ENCODE measurements at regions of chr11 and their contacts with region 1.

Region 1: GRCh38 chr11:118198370-118198769 is 21.9 kb upstream of the SCN2B start:
- DNase-seq: peak; percentile 92
- ATAC-seq: peak; percentile 40
- H3K4me3 Mint-ChIP-seq: no peak overlapping the region
- H3K27ac Mint-ChIP-seq: peak overlapping the region; percentile 78
- H3K4me1 Mint-ChIP-seq: peaks cover 14% of the 10 kb centered on the region
- H3K27me3 Mint-ChIP-seq: no peaks in the 10 kb centered on the region

Region 2: DNA sequence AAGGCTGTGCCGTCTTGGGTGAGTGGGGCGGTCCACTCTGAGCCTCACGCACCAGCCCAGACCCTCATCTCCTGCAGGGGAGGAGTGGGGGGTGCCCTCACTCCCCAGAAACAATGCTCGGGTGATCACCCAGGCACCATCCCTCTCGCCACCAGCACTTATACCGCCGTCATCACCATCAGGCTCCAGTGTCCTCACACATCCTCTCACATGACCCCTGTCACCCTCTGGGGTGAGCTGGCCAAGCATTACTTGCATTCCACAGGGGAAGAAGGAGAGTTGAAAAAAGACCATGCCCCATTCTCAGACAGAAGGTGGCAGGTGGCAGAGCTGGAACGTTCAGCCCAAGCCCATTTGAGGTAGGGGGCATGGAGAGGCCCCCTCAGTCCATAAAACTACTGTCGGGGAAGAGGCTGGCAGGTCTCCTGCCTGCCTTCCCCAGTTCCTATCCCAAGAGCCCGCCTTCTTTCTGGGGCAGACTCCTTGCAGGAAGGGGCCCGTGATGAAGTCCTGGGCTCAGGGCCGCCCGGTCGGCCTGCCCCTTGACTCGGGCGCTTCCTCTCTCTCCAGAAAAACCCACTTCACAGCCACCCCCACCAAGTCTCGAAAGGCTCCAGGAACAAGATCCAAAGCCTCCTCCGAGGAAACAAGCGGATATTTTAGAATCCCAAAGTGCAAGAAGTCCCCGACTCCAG is 554.6 kb before region 1 on chr11:
- CTCF ChIA-PET with region 1: no interaction called
- DNase-seq: no peak
- ATAC-seq: no peak
- H3K4me3 Mint-ChIP-seq: no peak overlapping the region
- H3K27ac Mint-ChIP-seq: no peak overlapping the region
- H3K4me1 Mint-ChIP-seq: no peaks in the 10 kb centered on the region
- H3K27me3 Mint-ChIP-seq: no peaks in the 10 kb centered on the region

Region 3: DNA sequence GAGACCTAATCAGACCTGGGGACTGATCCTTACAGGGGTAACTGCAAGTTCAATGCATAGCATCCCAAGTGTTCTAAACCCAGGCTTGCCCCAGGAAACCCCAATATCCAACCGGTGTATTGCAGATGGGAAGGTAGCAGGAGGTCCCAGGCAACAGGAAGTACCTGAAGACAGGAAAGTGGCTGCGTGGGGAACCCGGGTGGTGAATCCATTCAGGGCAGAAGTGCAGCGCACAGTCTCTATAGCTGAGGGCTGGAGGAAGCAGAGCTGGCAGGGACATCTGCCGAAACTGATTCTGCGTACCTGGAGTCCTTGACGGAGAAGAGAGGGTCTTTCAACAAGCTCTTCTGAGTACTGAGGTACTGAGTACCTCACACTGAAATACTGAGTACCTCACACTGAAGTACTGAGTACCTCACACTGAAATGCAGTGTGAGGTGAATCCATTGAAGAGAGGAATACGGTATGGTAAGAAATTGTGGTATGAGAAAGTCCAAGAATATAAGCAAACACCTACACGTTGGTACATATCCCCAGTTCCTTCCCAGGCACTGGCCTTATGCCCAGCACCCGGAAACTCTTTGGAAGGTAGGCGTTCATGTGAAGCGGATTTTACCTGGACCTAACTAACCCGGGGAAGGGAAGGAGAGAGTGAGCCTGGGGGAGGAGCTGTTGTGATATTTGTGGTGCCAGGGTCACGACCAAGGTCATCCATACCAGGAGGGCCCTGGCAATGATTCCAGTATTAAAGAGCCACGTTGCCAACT is 65.8 kb before region 1 on chr11:
- CTCF ChIA-PET with region 1: no interaction called
- DNase-seq: no peak
- ATAC-seq: no peak
- H3K4me3 Mint-ChIP-seq: no peak overlapping the region
- H3K27ac Mint-ChIP-seq: no peak overlapping the region
- H3K4me1 Mint-ChIP-seq: peaks cover 7% of the 10 kb centered on the region
- H3K27me3 Mint-ChIP-seq: peaks cover 42% of the 10 kb centered on the region

Region 4: DNA sequence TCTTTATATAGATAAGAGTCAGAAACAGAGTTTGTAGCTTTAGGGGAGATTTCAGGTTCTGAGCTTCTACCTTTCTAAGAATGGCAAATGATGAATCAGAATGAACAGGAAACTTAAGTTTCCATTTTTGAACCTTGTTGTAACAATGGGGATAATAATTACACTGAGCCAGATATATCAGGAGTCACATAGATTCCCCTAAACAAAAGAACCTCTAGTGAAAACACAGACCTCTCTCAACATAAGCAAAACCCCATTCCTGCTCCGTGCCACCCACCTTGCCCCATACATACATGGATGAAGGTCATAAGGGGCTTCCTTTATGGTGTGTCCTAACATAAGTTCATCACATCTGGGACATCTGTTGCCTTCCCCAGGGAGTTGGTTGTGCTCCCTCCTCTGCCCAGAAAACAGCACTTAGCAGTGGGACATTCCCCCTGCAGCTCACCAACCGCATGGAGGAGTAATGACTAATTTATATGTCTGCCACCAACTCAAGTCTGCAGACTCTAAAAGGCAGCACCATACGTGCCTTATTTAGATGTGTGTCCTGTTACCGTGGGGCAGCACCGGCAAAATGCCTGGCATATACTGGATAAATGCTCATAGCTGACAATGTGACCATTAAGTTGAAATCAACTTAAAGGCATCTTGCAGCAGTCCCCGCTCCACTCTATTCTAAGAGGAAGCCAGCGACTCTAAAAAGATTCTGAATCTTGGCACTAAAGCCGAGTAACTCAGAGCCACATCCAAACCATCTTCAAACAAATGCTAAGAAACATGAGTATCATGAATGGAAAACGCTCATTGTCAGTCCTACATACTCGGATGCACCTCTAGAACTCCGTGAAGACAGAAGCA is 18.5 kb after region 1 on chr11:
- CTCF ChIA-PET with region 1: interaction called, 53 read pairs
- DNase-seq: peak; percentile 75
- ATAC-seq: peak; percentile 67
- H3K4me3 Mint-ChIP-seq: peak overlapping the region; percentile 79
- H3K27ac Mint-ChIP-seq: peak overlapping the region; percentile 98
- H3K4me1 Mint-ChIP-seq: peaks cover 97% of the 10 kb centered on the region
- H3K27me3 Mint-ChIP-seq: no peaks in the 10 kb centered on the region

Region 5: GRCh38 chr11:118251858-118252652 is 53.7 kb after region 1 on chr11 and contains the start of gene MPZL3:
- CTCF ChIA-PET with region 1: interaction called, 80 read pairs
- DNase-seq: peak; percentile 90
- ATAC-seq: peak; percentile 65
- H3K4me3 Mint-ChIP-seq: peak within 1 kb of the TSS; percentile 90
- H3K27ac Mint-ChIP-seq: peak within 1 kb of the TSS; percentile 99
- H3K4me1 Mint-ChIP-seq: peaks cover 41% of the 10 kb centered on the region
- H3K27me3 Mint-ChIP-seq: no peaks in the 10 kb centered on the region
- total RNA-seq, gene MPZL3: 20.4 to 28.4 TPM

Region 6: GRCh38 chr11:118283756-118284350 is 85.5 kb after region 1 on chr11:
- CTCF ChIA-PET with region 1: interaction called, 27 read pairs
- DNase-seq: no peak
- ATAC-seq: peak; percentile 23
- H3K4me3 Mint-ChIP-seq: no peak overlapping the region
- H3K27ac Mint-ChIP-seq: peak overlapping the region; percentile 30
- H3K4me1 Mint-ChIP-seq: peaks cover 23% of the 10 kb centered on the region
- H3K27me3 Mint-ChIP-seq: no peaks in the 10 kb centered on the region

Region 7: DNA sequence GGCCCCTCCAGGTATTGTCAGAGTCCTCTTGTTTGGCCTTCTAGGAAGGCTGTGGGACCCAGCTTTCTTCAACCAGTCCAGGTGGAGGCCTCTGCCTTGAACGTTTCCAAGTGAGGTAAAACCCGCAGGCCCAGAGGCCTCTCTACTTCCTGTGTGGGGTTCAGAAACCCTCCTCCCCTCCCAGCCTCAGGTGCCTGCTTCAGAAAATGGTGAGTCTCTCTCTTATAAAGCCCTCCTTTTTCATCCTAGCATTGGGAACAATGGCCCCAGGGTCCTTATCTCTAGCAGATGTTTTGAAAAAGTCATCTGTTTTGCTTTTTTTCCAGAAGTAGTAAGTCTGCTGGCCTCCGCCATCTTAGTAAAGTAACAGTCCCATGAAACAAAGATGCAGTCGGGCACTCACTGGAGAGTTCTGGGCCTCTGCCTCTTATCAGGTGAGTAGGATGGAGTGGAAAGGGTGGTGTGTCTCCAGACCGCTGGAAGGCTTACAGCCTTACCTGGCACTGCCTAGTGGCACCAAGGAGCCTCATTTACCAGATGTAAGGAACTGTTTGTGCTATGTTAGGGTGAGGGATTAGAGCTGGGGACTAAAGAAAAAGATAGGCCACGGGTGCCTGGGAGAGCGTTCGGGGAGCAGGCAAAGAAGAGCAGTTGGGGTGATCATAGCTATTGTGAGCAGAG is 106.3 kb after region 1 on chr11 and contains the start of gene CD3E:
- CTCF ChIA-PET with region 1: interaction called, 20 read pairs
- DNase-seq: peak; percentile 90
- ATAC-seq: peak; percentile 80
- H3K4me3 Mint-ChIP-seq: peak within 1 kb of the TSS; percentile 91
- H3K27ac Mint-ChIP-seq: peak within 1 kb of the TSS; percentile 99
- H3K4me1 Mint-ChIP-seq: peaks cover 53% of the 10 kb centered on the region
- H3K27me3 Mint-ChIP-seq: no peaks in the 10 kb centered on the region
- total RNA-seq, gene CD3E: 526 to 535 TPM

Region 8: DNA sequence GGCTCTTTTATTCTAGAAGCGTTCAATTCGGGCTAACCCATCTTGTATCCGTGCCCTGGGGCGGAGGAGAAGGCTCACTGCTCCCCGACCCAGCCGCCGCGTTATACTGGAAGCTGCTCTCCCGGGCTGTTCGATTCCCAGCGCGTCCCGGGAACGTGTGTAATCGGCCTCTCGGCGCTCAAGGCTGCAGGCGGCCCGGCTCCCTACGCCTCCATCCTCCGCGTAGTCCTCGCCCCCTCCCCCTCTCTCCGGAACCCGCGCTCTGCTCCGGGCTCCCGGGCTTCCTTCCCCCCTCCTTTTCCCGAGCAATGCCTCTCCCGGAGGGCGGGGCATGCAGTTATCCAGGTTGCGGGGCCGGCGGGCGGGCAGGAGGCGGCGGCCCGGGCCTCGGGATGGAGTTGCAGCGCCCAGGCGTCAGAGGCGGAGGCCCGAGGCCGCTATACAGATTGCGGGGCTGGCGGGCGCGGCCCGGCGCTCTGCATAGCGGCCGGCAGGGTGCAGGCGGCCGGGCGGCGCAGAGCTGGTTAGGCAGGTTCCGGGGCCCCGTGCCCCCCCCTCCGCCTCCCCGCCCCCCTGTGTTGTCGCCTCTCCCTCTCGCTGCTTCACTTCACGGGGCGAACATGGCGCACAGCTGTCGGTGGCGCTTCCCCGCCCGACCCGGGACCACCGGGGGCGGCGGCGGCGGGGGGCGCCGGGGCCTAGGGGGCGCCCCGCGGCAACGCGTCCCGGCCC is 237.7 kb after region 1 on chr11 and contains the start of gene KMT2A:
- CTCF ChIA-PET with region 1: no interaction called
- DNase-seq: peak; percentile 93
- ATAC-seq: peak; percentile 54
- H3K4me3 Mint-ChIP-seq: peak within 1 kb of the TSS; percentile 88
- H3K27ac Mint-ChIP-seq: peak within 1 kb of the TSS; percentile 94
- H3K4me1 Mint-ChIP-seq: peaks cover 38% of the 10 kb centered on the region
- H3K27me3 Mint-ChIP-seq: peaks cover 4% of the 10 kb centered on the region
- total RNA-seq, gene KMT2A: 116 to 125 TPM

Region 9: DNA sequence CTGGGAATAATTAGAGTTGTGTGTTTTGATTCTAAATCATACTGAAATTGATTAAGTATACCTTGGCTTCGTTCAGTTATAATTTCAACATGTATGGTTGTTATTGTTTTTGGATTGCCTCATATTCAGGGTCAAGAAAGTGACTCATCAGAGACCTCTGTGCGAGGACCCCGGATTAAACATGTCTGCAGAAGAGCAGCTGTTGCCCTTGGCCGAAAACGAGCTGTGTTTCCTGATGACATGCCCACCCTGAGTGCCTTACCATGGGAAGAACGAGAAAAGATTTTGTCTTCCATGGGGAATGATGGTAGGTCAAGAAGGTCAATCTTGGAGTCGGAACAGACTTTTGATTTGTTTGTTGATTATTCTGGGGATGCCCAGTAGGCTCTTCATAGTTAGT is 278.3 kb after region 1 on chr11:
- CTCF ChIA-PET with region 1: no interaction called
- DNase-seq: no peak
- ATAC-seq: no peak
- H3K4me3 Mint-ChIP-seq: no peak overlapping the region
- H3K27ac Mint-ChIP-seq: peak overlapping the region; percentile 62
- H3K4me1 Mint-ChIP-seq: peaks cover 17% of the 10 kb centered on the region
- H3K27me3 Mint-ChIP-seq: no peaks in the 10 kb centered on the region

Measured in activated CD8-positive, alpha-beta memory T cell treated with anti-CD3 and anti-CD28 coated beads, Interleukin-2, amount 10 ng/mL, durations not matched to agents 7 days and 5 days (primary cell).